ENCODE measurements at regions of chr9 and their contacts with region 1.

Region 1: GRCh38 chr9:93108291-93109041 is 12.4 kb downstream of the CARD19 start:
- DNase-seq: peak in 2 of 5 donors; percentile 1 to 49
- H3K4me3 ChIP-seq: no peak overlapping the region
- H3K4me3 Mint-ChIP-seq: no peak overlapping the region
- H3K27ac ChIP-seq: no peak overlapping the region
- H3K27ac Mint-ChIP-seq: peak overlapping the region in 3 of 8 donors; percentile 21 to 91 (median 47)
- H3K4me1 ChIP-seq: peaks cover 48% of the 10 kb centered on the region
- H3K4me1 Mint-ChIP-seq: peaks cover 40 to 61% (median 46%) of the 10 kb centered on the region in 3 donors
- H3K27me3 ChIP-seq: no peaks in the 10 kb centered on the region
- H3K27me3 Mint-ChIP-seq: no peaks in the 10 kb centered on the region

Region 2: GRCh38 chr9:92954049-92954861 is 154.2 kb before region 1 on chr9:
- CTCF ChIA-PET with region 1: interaction called, 12 read pairs
- POLR2A ChIA-PET with region 1: interaction called, 6 read pairs
- DNase-seq: peak; percentile 66 to 93 (median 89)
- H3K4me3 ChIP-seq: peak overlapping the region; percentile 63
- H3K4me3 Mint-ChIP-seq: peak overlapping the region; percentile 76 to 95 (median 85)
- H3K27ac ChIP-seq: peak overlapping the region; percentile 26
- H3K27ac Mint-ChIP-seq: peak overlapping the region; percentile 92 to 99 (median 97)
- H3K4me1 ChIP-seq: peaks cover 84% of the 10 kb centered on the region
- H3K4me1 Mint-ChIP-seq: peaks cover 79 to 89% (median 84%) of the 10 kb centered on the region in 3 donors
- H3K27me3 ChIP-seq: no peaks in the 10 kb centered on the region
- H3K27me3 Mint-ChIP-seq: no peaks in the 10 kb centered on the region

Region 3: GRCh38 chr9:93028448-93029006 is 79.9 kb before region 1 on chr9:
- CTCF ChIA-PET with region 1: interaction called, 13 read pairs
- POLR2A ChIA-PET with region 1: interaction called, 3 read pairs
- DNase-seq: peak; percentile 51 to 89 (median 83)
- H3K4me3 ChIP-seq: peak overlapping the region; percentile 60
- H3K4me3 Mint-ChIP-seq: peak overlapping the region; percentile 52 to 90 (median 80)
- H3K27ac ChIP-seq: peak overlapping the region; percentile 60
- H3K27ac Mint-ChIP-seq: peak overlapping the region; percentile 92 to 98 (median 95)
- H3K4me1 ChIP-seq: peaks cover 91% of the 10 kb centered on the region
- H3K4me1 Mint-ChIP-seq: peaks cover 64 to 87% (median 80%) of the 10 kb centered on the region in 3 donors
- H3K27me3 ChIP-seq: no peaks in the 10 kb centered on the region
- H3K27me3 Mint-ChIP-seq: no peaks in the 10 kb centered on the region

Region 4: DNA sequence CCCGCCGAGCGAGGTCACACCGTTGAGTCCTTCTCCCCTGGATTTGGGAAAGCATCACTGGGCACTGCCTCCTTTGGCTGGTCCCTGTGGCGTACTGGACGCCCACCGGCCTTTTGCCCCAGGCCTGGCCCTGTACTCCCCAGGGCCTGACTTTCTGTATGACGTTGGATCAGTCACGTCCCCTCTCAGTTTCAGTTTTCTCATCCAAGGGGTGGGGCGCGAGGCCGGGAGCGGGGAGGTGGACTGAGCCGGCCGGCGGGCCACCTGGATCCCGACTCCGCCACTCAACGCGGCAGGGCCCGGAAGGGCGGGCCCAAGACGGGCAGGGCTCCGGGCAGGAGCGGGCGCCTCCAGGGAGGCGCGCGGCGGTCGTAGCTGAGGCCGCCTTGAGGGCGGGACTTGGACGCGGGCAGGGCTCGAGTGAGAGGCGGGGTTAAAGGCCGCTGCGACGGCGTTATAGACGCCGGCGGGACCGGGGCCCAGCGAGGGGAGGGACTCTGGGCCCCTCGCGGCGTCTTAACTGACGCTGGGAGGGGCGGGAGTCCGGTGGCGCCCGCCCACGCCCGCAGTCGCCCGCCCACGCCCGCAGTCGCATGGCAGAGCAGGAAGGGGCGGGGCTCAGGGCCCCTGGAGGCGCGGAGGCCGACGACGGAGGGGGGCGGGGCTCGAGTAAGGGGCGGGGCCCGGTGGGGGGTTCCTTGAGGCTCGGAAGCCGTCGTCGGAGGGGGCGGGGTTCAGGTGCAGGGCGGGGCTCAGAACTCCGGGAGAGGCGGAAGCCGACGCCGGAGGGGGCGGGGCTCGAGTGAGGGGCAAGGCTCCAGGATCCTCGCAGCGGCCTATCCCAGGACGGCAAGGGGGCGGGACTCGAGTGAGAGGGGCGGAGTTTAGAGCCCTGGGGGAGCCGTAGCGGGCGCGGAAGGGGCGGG is 13.0 kb before region 1 on chr9:
- CTCF ChIA-PET with region 1: interaction called, 34 read pairs
- POLR2A ChIA-PET with region 1: no interaction called
- DNase-seq: peak; percentile 100
- H3K4me3 ChIP-seq: peak overlapping the region; percentile 76
- H3K4me3 Mint-ChIP-seq: peak overlapping the region; percentile 81 to 90 (median 85)
- H3K27ac ChIP-seq: peak overlapping the region; percentile 91
- H3K27ac Mint-ChIP-seq: peak overlapping the region; percentile 94 to 99 (median 96)
- H3K4me1 ChIP-seq: peaks cover 61% of the 10 kb centered on the region
- H3K4me1 Mint-ChIP-seq: peaks cover 59 to 82% (median 63%) of the 10 kb centered on the region in 3 donors
- H3K27me3 ChIP-seq: no peaks in the 10 kb centered on the region
- H3K27me3 Mint-ChIP-seq: no peaks in the 10 kb centered on the region

Region 5: DNA sequence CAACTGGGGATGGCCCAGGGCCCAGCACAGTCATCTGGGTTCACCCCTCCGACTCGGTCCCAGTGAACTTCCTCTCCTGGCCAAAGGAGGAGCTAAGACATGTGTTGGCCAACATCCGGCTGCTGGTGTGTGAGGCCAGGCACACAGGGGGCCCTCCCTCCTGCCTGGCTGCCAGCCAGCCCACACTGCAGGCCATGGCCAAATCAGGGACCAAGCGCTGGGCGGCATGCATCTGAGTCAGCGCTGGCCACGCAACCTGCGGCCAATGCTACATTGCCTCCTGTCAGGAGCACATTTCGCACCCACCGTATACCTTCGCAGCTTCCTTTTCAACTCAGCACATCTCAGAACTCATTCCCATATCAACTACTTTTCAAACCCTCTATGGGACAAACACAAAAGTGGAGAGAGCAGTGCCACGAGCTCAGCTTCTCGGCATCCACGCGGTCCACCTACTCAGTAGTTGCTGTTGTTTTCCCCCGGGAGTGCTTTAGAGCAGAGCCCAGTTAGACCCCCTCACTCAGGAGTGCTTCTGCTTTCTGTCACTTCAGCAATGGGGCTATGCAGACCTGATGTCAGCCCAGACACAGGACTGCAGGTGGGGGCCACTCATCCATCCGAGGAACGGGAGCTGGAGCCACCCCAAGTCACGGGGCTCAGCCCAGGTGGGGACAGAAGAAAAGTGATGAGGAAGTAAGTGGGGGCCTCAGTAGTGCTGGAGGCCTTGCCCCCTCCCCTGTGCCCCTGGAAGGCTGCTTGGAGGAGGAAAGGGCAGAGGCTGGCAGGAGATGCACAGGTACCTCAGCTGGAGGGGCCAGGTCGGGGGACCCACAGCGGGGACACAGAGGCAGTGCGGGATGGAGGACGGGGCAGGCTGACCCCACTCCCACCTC is 11.7 kb after region 1 on chr9:
- CTCF ChIA-PET with region 1: interaction called, 24 read pairs
- POLR2A ChIA-PET with region 1: no interaction called
- DNase-seq: peak in 4 of 5 donors; percentile 30 to 59 (median 34)
- H3K4me3 ChIP-seq: no peak overlapping the region
- H3K4me3 Mint-ChIP-seq: peak overlapping the region in 5 of 7 donors; percentile 14 to 75 (median 53)
- H3K27ac ChIP-seq: peak overlapping the region; percentile 24
- H3K27ac Mint-ChIP-seq: peak overlapping the region; percentile 75 to 97 (median 86)
- H3K4me1 ChIP-seq: peaks cover 20% of the 10 kb centered on the region
- H3K4me1 Mint-ChIP-seq: peaks cover 21 to 46% (median 26%) of the 10 kb centered on the region in 3 donors
- H3K27me3 ChIP-seq: no peaks in the 10 kb centered on the region
- H3K27me3 Mint-ChIP-seq: no peaks in the 10 kb centered on the region

Region 6: GRCh38 chr9:93126825-93127368 is 18.4 kb after region 1 on chr9:
- CTCF ChIA-PET with region 1: interaction called, 24 read pairs
- POLR2A ChIA-PET with region 1: interaction called, 3 read pairs
- DNase-seq: peak in 1 of 5 donors; percentile 41
- H3K4me3 ChIP-seq: no peak overlapping the region
- H3K4me3 Mint-ChIP-seq: peak overlapping the region in 5 of 7 donors; percentile 26 to 76 (median 61)
- H3K27ac ChIP-seq: no peak overlapping the region
- H3K27ac Mint-ChIP-seq: peak overlapping the region; percentile 87 to 99 (median 94)
- H3K4me1 ChIP-seq: peaks cover 60% of the 10 kb centered on the region
- H3K4me1 Mint-ChIP-seq: peaks cover 46 to 80% (median 55%) of the 10 kb centered on the region in 3 donors
- H3K27me3 ChIP-seq: no peaks in the 10 kb centered on the region
- H3K27me3 Mint-ChIP-seq: no peaks in the 10 kb centered on the region

Region 7: GRCh38 chr9:93134015-93134739 is 25.7 kb after region 1 on chr9 and contains the start of gene NINJ1:
- CTCF ChIA-PET with region 1: interaction called, 13 read pairs
- POLR2A ChIA-PET with region 1: no interaction called
- DNase-seq: peak; percentile 81 to 89 (median 87)
- H3K4me3 ChIP-seq: peak within 1 kb of the TSS; percentile 80
- H3K4me3 Mint-ChIP-seq: peak within 1 kb of the TSS; percentile 88 to 97 (median 90)
- H3K27ac ChIP-seq: peak within 1 kb of the TSS; percentile 88
- H3K27ac Mint-ChIP-seq: peak within 1 kb of the TSS; percentile 94 to 99 (median 98)
- H3K4me1 ChIP-seq: peaks cover 52% of the 10 kb centered on the region
- H3K4me1 Mint-ChIP-seq: peaks cover 29 to 55% (median 36%) of the 10 kb centered on the region in 3 donors
- H3K27me3 ChIP-seq: no peaks in the 10 kb centered on the region
- H3K27me3 Mint-ChIP-seq: peaks cover 0 to 3% of the 10 kb centered on the region in 2 donors
- total RNA-seq, gene NINJ1: 59.9 to 62.9 TPM